Activated CD8-positive, alpha-beta T cell treated with anti-CD3 and anti-CD28 coated beads for 36 hours (primary cell): ENCODE measurements at regions of chr2 and their contacts with region 1.

Region 1: GRCh38 chr2:237744613-237745249 is 53.8 kb upstream of the RBM44 start:
- DNase-seq: peak; percentile 77
- ATAC-seq: peak; percentile 81
- H3K4me3 Mint-ChIP-seq: no peak overlapping the region
- H3K27ac Mint-ChIP-seq: peak overlapping the region; percentile 67
- H3K4me1 Mint-ChIP-seq: peaks cover 39% of the 10 kb centered on the region
- H3K27me3 Mint-ChIP-seq: no peaks in the 10 kb centered on the region
- CTCF ChIP-seq: peak; percentile 94

Region 2: GRCh38 chr2:237581751-237582746 is 162.7 kb before region 1 on chr2:
- CTCF ChIA-PET with region 1: interaction called, 79 read pairs
- POLR2A ChIA-PET with region 1: no interaction called
- intact Hi-C with region 1: loop called (anchors 10 kb)
- DNase-seq: peak; percentile 89
- ATAC-seq: peak; percentile 98
- H3K4me3 Mint-ChIP-seq: no peak overlapping the region
- H3K27ac Mint-ChIP-seq: peak overlapping the region; percentile 79
- H3K4me1 Mint-ChIP-seq: peaks cover 8% of the 10 kb centered on the region
- H3K27me3 Mint-ChIP-seq: no peaks in the 10 kb centered on the region
- CTCF ChIP-seq: peak; percentile 67

Region 3: GRCh38 chr2:237691908-237692600 is 52.7 kb before region 1 on chr2:
- CTCF ChIA-PET with region 1: interaction called, 17 read pairs
- POLR2A ChIA-PET with region 1: interaction called, 4 read pairs
- intact Hi-C with region 1: no loop called
- DNase-seq: peak; percentile 95
- ATAC-seq: peak; percentile 68
- H3K4me3 Mint-ChIP-seq: peak overlapping the region; percentile 98
- H3K27ac Mint-ChIP-seq: peak overlapping the region; percentile 93
- H3K4me1 Mint-ChIP-seq: peaks cover 52% of the 10 kb centered on the region
- H3K27me3 Mint-ChIP-seq: no peaks in the 10 kb centered on the region
- CTCF ChIP-seq: no peak

Region 4: GRCh38 chr2:237708065-237708398 is 36.7 kb before region 1 on chr2:
- CTCF ChIA-PET with region 1: interaction called, 24 read pairs
- POLR2A ChIA-PET with region 1: interaction called, 3 read pairs
- intact Hi-C with region 1: no loop called
- DNase-seq: no peak
- ATAC-seq: no peak
- H3K4me3 Mint-ChIP-seq: no peak overlapping the region
- H3K27ac Mint-ChIP-seq: no peak overlapping the region
- H3K4me1 Mint-ChIP-seq: peaks cover 62% of the 10 kb centered on the region
- H3K27me3 Mint-ChIP-seq: no peaks in the 10 kb centered on the region
- CTCF ChIP-seq: no peak

Region 5: GRCh38 chr2:237774802-237775553 is 30.2 kb after region 1 on chr2:
- CTCF ChIA-PET with region 1: interaction called, 12 read pairs
- POLR2A ChIA-PET with region 1: no interaction called
- intact Hi-C with region 1: no loop called
- DNase-seq: peak; percentile 65
- ATAC-seq: peak; percentile 83
- H3K4me3 Mint-ChIP-seq: no peak overlapping the region
- H3K27ac Mint-ChIP-seq: no peak overlapping the region
- H3K4me1 Mint-ChIP-seq: no peaks in the 10 kb centered on the region
- H3K27me3 Mint-ChIP-seq: no peaks in the 10 kb centered on the region
- CTCF ChIP-seq: peak; percentile 78